ENCODE measurements at regions of chr18 and their contacts with region 1.

Region 1: GRCh38 chr18:76982841-76983587 is 149.6 kb downstream of the MBP start:
- DNase-seq: peak; percentile 67 to 95 (median 85)
- ATAC-seq: peak; percentile 99
- H3K4me3 ChIP-seq: no peak overlapping the region
- H3K27ac ChIP-seq: no peak overlapping the region
- H3K4me1 ChIP-seq: peaks cover 0 to 4% of the 10 kb centered on the region in 2 donors
- H3K27me3 ChIP-seq: no peaks in the 10 kb centered on the region
- CTCF ChIP-seq: peak; percentile 92 to 97

Region 2: DNA sequence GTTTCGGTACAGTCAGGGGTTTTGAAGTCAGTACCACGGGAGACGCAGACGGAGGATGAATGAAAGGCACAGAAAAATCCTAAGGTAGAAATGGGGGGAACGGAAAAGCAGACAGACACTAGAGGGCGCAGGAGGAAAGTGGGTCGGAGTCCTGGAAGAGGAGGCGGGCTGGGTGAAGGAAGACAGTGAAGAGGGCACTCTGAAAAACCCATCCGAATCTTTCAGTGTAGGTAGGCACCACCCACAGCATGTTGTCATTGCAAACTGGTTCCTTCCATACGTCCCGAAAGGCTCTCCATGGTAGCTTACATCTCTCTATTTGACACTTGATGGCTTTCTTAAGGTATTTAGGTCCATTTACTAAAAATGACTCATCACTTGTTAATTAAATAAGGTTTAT is 179.2 kb before region 1 on chr18:
- intact Hi-C with region 1: loop called in 1 of 2 experiments (anchors 10 kb)
- DNase-seq: peak in 3 of 4 donors; percentile 32 to 56 (median 50)
- ATAC-seq: peak; percentile 79
- H3K4me3 ChIP-seq: no peak overlapping the region
- H3K27ac ChIP-seq: no peak overlapping the region
- H3K4me1 ChIP-seq: peaks cover 4 to 16% of the 10 kb centered on the region in 2 donors
- H3K27me3 ChIP-seq: peaks cover 0 to 22% of the 10 kb centered on the region in 2 donors
- CTCF ChIP-seq: peak; percentile 69 to 72

Region 3: DNA sequence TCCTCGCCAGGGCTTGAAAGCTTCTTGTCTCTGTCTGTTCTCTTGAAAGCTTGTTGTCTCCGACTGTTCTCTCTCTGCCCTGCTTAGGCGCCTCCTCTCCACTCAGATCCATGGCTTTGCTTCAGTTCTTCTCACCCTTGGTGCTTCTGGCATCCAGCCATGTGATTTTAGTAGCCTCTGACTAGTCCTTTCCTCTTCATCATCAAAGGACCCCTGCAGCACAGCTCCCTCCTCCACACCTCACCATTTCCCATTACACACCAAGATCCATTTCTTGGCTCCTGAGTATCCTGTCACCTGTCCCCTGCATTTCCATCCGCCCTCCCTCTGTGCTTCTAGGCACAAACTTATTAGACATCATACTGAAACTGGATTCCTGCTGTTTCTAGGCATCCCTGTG is 101.3 kb before region 1 on chr18:
- intact Hi-C with region 1: no loop called
- DNase-seq: no peak
- ATAC-seq: no peak
- H3K4me3 ChIP-seq: no peak overlapping the region
- H3K27ac ChIP-seq: no peak overlapping the region
- H3K4me1 ChIP-seq: no peaks in the 10 kb centered on the region
- H3K27me3 ChIP-seq: no peaks in the 10 kb centered on the region
- CTCF ChIP-seq: no peak

Region 4: DNA sequence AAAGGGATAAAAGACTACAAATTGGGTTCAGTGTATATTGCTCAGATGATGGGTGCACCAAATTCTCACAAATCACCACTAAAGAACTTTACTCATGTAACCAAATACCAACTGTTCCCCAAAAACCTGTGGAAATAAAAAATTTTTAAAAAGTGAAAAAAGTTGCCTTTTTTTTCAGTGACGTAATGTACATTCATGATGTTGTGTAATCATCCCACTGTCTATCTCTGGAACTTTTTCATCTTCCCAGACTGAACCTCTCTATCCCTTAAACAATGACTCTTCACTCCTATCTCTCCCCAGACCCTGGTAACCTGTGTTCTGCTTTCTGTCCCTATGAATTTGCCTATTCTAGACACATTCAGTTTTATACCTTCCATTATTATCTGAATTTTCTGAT is 247.6 kb after region 1 on chr18:
- intact Hi-C with region 1: no loop called
- DNase-seq: no peak
- ATAC-seq: no peak
- H3K4me3 ChIP-seq: no peak overlapping the region
- H3K27ac ChIP-seq: no peak overlapping the region
- H3K4me1 ChIP-seq: no peaks in the 10 kb centered on the region
- H3K27me3 ChIP-seq: no peaks in the 10 kb centered on the region
- CTCF ChIP-seq: no peak